ENCODE measurements at regions of chr7 and their contacts with region 1.

Region 1: DNA sequence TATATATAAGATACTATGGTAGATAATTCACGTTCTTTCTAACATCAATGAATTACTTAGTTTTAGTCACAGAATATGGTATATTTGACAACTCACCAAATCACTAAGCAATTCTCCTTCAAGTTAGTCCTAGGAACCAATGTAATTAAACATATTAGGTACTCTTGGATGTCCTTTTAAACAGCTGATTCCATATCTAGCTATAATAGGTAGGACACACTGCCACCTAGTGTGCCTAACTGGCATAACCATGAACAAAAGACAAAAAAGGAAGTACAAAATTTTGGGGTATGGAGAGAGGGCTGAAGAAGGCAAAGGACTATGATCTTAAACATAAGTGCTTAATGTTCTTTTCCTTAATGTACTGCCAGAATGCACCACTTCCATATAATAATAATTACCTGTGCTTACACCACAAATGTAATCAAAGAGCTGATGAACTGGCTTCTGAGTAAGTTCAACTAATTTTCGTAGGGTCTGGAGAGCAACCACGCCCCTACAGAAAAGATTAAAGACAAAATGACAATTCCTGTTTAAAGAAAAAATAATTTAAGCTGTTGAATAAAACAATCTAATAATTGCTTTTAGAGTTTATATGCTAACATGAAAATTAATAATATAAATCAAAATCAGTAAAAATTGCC is 28.7 kb downstream of the PNPLA8 start:
- DNase-seq: peak; percentile 50
- H3K27ac ChIP-seq: no peak overlapping the region
- CTCF ChIP-seq: peak; percentile 93

Region 2: GRCh38 chr7:108459931-108460551 is 37.2 kb before region 1 on chr7:
- CTCF ChIA-PET with region 1: interaction called, 11 read pairs
- POLR2A ChIA-PET with region 1: no interaction called
- DNase-seq: peak; percentile 32
- H3K27ac ChIP-seq: no peak overlapping the region
- CTCF ChIP-seq: peak; percentile 62